ENCODE measurements at regions of chr11 and their contacts with region 1.

Region 1: DNA sequence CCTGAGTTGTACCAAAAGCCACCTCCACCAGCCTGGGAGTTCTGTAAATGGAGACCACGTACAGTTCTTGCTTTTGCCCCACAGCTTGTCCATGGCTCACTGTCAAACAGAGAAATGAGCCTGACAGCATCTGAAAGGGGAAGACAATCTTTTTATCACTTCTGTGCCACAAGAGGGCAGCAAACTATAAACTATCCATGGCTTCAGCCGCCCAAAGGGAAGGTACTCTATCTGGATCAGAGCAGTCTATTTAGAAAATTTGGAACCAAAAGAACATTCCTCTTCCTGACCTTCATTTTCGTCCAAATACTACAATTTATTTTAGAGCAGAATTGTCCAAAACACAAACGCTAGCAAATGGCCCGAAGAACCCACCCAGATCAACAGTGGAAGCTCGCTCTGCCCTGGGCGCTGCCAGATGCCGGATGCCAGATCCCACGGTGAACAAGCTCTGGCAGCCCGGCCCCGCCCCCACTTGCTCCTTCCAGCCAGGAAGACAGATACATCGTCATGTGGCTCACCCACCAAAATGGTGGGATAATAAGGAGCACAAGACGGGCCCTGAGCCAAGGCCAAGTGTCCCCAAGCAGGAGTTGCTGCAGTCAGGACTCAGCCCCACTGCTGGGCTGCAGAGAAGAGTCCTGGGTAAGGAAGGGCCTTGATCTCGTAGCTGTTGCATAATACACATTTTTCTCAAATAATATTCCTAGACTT is 23.9 kb upstream of the SCGB1A1 start:
- DNase-seq: peak; percentile 86
- H3K4me3 ChIP-seq: peak overlapping the region; percentile 20 to 71 (median 38)
- H3K27ac ChIP-seq: peak overlapping the region; percentile 15
- H3K4me1 ChIP-seq: peaks cover 4% of the 10 kb centered on the region
- H3K27me3 ChIP-seq: no peaks in the 10 kb centered on the region
- CTCF ChIP-seq: peak; percentile 47 to 56
- POLR2A ChIP-seq: no peak

Region 2: GRCh38 chr11:62419314-62419929 is 24.4 kb after region 1 on chr11:
- CTCF ChIA-PET with region 1: interaction called, 65 read pairs
- POLR2A ChIA-PET with region 1: interaction called, 4 read pairs
- dilution Hi-C with region 1: no loop called
- intact Hi-C with region 1: no loop called
- DNase-seq: no peak
- H3K4me3 ChIP-seq: no peak overlapping the region
- H3K27ac ChIP-seq: no peak overlapping the region
- H3K4me1 ChIP-seq: no peaks in the 10 kb centered on the region
- H3K27me3 ChIP-seq: peaks cover 3 to 6% of the 10 kb centered on the region in 2 experiments
- CTCF ChIP-seq: no peak
- POLR2A ChIP-seq: no peak

Region 3: GRCh38 chr11:62573592-62574362 is 178.8 kb after region 1 on chr11 and contains the start of gene EEF1G:
- CTCF ChIA-PET with region 1: interaction called, 18 read pairs
- POLR2A ChIA-PET with region 1: no interaction called
- dilution Hi-C with region 1: no loop called
- intact Hi-C with region 1: no loop called
- DNase-seq: peak; percentile 100
- H3K4me3 ChIP-seq: peak within 1 kb of the TSS; percentile 51 to 85 (median 70)
- H3K27ac ChIP-seq: peak within 1 kb of the TSS; percentile 99
- H3K4me1 ChIP-seq: peaks cover 59% of the 10 kb centered on the region
- H3K27me3 ChIP-seq: no peaks in the 10 kb centered on the region
- CTCF ChIP-seq: no peak
- POLR2A ChIP-seq: peak; percentile 96
- total RNA-seq, gene EEF1G: 1,341 and 1,345 TPM in 2 replicates

Region 4: DNA sequence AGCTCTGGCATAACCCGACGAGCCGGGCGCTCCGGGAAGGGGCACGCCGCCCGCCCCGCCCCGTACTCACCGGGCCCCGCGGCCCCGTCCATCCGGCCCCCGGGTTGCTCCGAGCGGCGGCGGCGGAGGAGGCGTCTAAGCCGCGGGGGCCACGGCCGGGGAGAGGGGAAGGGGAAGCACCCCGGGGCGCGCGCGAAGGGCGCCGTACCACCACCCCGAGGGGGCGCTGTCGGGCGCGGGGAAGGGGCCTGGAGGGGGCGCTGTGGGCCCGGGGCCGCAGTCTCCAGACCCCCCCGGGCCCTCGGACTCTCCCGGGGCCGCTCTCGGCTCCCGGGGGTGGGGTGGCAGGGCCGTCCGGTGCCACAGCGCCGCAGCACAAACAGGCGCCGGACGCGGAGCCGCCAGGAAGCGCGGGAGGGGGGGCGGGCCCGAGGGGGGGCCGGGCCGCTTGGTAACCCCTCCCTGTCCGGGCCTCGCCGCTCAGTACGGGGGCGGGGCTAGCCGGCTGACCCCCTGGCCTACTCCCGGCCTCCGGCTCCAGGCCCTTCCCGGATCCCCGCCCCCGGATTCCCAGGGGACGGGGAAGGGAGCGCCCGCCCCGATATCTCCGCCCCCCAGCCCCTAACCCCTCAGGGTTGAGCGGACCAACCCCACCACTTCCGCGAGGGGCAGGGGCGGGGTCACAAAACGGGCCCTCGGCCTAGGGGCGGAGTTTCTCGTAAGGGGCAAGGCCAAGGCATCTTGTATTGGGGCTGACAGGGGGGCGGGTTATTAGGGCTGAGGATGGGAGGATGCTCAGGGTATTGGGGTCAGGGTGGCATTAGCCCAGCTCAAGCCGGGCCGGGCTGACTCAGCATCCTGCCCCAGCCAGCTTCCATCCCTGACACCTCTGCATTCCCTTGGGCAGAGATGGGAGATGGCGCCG is 217.6 kb after region 1 on chr11 and contains the starts of genes EML3 and ROM1:
- CTCF ChIA-PET with region 1: interaction called, 6 read pairs
- POLR2A ChIA-PET with region 1: no interaction called
- dilution Hi-C with region 1: no loop called
- intact Hi-C with region 1: loop called (anchors 5 kb)
- DNase-seq: peak; percentile 80
- H3K4me3 ChIP-seq: peak within 1 kb of the TSS; percentile 61 to 74 (median 67)
- H3K27ac ChIP-seq: peak within 1 kb of the TSS; percentile 30
- H3K4me1 ChIP-seq: peaks cover 22% of the 10 kb centered on the region
- H3K27me3 ChIP-seq: no peaks in the 10 kb centered on the region
- CTCF ChIP-seq: peak; percentile 88 to 89
- POLR2A ChIP-seq: peak; percentile 41
- total RNA-seq, gene EML3: 101 and 110 TPM in 2 replicates
- total RNA-seq, gene ROM1: 8.2 and 8.8 TPM in 2 replicates

Region 5: DNA sequence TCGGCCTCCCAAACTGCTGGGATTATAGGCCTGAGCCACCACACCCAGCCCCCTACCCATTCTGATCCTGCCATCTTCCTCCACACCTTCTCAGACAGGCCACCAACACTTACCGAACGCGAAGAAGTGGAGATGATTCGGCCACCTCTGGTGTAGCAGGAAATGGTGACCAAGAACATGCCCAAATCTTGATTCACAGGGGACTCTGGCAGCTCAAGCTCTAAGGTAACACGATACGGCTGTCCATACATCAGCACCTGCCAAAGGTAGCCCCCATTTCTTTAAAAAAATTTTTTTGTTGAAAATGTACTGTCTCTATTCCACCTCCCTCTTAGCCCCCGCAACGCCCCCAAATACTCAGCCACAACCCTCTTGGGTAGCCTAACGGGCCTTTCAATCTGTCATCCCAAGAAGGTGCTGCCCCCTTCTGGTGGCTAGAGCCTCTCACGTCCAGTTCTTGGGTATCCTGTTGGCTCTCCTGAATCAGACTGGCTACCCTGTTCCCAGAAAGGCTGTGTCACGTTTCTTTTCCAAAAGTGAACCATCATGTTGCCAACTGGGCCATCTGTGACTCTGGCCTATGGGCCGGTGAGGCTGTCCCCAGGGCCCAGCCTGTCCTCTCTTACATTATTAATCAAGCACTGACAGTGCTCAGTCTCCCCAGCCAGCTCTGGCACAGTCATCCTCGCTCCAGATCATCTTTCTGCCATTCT is 299.6 kb after region 1 on chr11:
- CTCF ChIA-PET with region 1: interaction called, 87 read pairs
- POLR2A ChIA-PET with region 1: no interaction called
- dilution Hi-C with region 1: no loop called
- intact Hi-C with region 1: loop called (anchors 1 kb)
- DNase-seq: peak; percentile 68
- H3K4me3 ChIP-seq: no peak overlapping the region
- H3K27ac ChIP-seq: no peak overlapping the region
- H3K4me1 ChIP-seq: no peaks in the 10 kb centered on the region
- H3K27me3 ChIP-seq: no peaks in the 10 kb centered on the region
- CTCF ChIP-seq: peak; percentile 80 to 83
- POLR2A ChIP-seq: no peak

Region 6: DNA sequence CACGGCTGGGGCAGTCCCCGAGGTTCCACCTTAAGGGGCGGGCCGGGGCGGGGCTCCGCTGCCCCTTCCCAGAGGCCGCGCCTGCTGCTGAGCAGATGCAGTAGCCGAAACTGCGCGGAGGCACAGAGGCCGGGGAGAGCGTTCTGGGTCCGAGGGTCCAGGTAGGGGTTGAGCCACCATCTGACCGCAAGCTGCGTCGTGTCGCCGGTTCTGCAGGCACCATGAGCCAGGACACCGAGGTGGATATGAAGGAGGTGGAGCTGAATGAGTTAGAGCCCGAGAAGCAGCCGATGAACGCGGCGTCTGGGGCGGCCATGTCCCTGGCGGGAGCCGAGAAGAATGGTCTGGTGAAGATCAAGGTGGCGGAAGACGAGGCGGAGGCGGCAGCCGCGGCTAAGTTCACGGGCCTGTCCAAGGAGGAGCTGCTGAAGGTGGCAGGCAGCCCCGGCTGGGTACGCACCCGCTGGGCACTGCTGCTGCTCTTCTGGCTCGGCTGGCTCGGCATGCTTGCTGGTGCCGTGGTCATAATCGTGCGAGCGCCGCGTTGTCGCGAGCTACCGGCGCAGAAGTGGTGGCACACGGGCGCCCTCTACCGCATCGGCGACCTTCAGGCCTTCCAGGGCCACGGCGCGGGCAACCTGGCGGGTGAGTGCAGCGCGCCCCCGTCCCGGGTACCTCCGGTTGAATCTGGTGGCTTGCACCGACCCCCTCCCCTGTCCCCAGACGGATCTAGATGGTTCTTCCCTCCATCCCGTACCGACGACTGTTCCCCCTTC is 486.0 kb after region 1 on chr11 and contains the start of gene SLC3A2:
- CTCF ChIA-PET with region 1: interaction called, 3 read pairs
- POLR2A ChIA-PET with region 1: no interaction called
- dilution Hi-C with region 1: no loop called
- intact Hi-C with region 1: loop called (anchors 5 kb)
- DNase-seq: peak; percentile 91
- H3K4me3 ChIP-seq: peak within 1 kb of the TSS; percentile 75 to 100 (median 95)
- H3K27ac ChIP-seq: peak within 1 kb of the TSS; percentile 100
- H3K4me1 ChIP-seq: peaks cover 45% of the 10 kb centered on the region
- H3K27me3 ChIP-seq: no peaks in the 10 kb centered on the region
- CTCF ChIP-seq: peak; percentile 63 to 89
- POLR2A ChIP-seq: peak; percentile 99
- total RNA-seq, gene SLC3A2: 190 and 208 TPM in 2 replicates